ENCODE measurements at regions of chr16 and their contacts with region 1.

Region 1: DNA sequence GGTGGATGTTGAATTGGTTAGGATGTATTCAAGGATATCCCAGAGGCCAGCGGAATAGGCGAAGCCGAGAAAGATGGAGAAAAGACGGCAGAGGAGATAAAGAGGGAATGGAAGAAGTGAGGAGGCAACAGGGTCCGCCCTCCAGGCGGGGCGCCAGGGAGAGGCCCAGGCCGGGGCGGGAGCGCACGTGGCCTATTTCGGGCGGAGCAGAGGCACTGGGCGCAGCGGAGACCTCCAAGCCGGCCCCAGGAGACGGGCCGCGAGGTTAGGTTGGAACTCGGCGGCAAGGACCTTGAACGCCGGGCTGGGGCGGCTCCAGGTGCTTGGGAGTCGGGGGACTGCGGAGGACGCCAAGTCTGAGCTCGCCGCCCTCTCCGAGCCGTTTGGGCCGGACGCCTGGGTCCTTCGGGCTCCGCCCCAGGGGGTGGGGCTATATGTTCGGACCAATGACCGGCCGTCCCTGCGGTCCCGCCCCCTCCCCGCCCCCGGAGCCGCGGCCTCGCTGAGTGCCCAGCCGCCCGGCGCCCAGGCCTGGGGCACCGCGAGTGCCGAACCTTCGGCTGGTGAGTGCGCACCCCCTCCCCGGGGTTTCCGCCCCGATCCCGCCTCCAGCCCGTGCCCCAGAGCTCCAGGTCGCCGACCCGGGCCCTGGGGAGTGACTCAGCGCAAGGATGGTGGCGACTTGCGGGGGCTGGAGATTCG is at the start of gene ZNF771:
- H3K4me3 ChIP-seq: peak within 1 kb of the TSS; percentile 82
- H3K27ac ChIP-seq: peak within 1 kb of the TSS; percentile 92
- H3K4me1 ChIP-seq: peaks cover 5% of the 10 kb centered on the region; the same call in 1 of the 2 replicates
- CTCF ChIP-seq: peak; percentile 81

Region 2: DNA sequence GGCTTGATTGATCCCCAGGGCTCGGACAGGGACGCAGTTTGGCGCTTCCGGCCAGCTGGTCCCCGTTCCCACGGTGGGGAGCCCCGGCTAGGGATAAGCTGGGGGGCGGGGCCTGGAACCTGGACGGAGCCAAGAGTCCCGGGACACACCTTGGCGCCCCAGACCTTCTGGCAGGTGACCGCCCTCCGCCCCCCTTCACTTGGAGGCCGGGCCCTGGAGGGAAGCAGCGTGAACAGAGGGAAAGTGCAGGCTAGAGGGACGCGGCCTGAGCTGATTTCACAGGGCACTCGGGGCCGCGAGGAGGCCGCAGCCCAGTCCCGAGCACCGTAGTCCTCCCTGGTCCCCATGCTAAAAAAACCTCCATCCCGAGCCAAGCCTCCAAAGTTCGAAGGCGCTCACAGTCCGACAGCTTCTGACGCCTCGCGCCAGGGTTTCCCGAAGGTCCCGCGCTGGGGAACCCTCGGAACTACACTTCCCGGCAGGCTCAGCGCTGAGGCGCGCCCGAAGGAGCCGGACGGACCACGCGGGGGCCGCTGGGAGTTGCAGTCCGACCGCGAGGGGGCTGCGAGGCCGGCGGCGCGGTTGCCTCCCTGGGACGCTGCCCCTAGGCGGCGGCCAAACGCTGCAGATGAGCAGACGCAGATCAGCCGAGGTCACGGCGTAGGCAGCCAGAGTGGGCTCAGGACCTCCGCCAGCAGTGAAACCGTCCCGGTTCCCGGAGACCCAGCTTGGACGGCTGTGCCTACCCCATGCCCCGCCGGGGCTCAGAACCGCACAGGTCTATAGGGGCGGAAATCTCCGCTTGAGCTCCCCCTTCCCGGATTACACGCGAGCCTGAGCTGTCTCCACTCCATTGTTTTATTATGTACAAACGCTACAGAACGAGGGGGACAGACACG is 315.5 kb before region 1 on chr16 and contains the start of gene TBX6:
- CTCF ChIA-PET with region 1: interaction called, 11 read pairs
- POLR2A ChIA-PET with region 1: interaction called, 6 read pairs
- H3K4me3 ChIP-seq: peak within 1 kb of the TSS; percentile 12
- H3K27ac ChIP-seq: peak within 1 kb of the TSS; percentile 8; the same call in 1 of the 2 replicates
- H3K4me1 ChIP-seq: no peaks in the 10 kb centered on the region
- CTCF ChIP-seq: peak; percentile 98

Region 3: GRCh38 chr16:30365200-30365720 is 42.0 kb before region 1 on chr16:
- CTCF ChIA-PET with region 1: interaction called, 16 read pairs
- POLR2A ChIA-PET with region 1: interaction called, 32 read pairs
- H3K4me3 ChIP-seq: no peak overlapping the region
- H3K27ac ChIP-seq: no peak overlapping the region
- H3K4me1 ChIP-seq: no peaks in the 10 kb centered on the region; the same call in 1 of the 2 replicates
- CTCF ChIP-seq: no peak

Region 4: DNA sequence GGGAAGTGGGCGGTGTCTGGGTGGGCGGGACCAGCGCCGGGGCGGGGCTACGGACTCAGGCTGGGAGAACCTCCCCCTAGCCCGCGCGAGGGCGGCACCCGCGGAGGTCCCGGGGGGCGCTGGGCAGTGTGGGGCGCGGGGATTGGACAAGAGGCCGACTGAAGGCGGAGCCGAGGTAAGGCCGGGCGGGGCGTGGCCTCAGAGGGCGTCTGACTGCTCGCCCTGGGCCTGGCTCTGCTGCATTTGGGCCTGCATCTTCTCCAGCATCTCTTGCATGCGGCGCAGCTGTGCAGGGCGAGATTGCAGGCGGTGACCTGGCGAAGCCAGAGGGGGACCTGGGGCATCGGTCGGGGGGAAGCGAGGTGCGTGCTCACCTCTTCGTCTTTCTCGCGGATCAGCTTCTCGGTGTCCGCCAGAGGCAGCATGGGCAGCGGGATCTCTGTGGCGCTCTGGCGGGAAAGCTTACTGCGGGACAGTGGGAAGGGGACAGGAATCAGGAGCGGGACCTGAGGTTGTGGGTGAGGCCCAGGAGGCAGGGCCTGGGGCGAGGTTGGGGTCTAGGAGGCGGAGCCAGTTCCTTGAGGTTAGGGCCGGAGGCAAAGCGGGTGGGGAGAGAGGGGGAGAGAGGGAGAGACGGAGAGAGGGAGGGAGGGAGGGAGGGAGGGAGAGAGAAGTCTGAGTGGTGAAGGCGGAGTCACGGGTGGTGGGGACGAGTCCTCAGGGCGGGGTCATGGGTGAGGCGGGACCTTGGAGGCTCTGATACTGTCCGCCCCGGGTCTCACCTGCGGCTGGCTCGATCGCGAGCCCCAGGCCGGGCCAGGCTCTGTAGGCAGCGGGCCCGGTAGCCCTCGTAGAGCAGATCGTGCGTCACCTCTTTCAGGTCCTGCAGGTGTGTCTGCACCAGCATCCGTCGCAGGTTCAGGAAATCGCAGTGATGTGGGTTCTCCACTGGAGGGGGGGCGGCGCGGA is 28.7 kb before region 1 on chr16:
- CTCF ChIA-PET with region 1: interaction called, 10 read pairs
- POLR2A ChIA-PET with region 1: interaction called, 8 read pairs
- H3K4me3 ChIP-seq: peak overlapping the region; percentile 78
- H3K27ac ChIP-seq: peak overlapping the region; percentile 97
- H3K4me1 ChIP-seq: no peaks in the 10 kb centered on the region
- CTCF ChIP-seq: peak; percentile 92

Region 5: GRCh38 chr16:30417529-30418349 is 10.5 kb after region 1 on chr16:
- CTCF ChIA-PET with region 1: interaction called, 15 read pairs
- POLR2A ChIA-PET with region 1: interaction called, 64 read pairs
- H3K4me3 ChIP-seq: peak overlapping the region; percentile 37
- H3K27ac ChIP-seq: peak overlapping the region; percentile 85
- H3K4me1 ChIP-seq: peaks cover 12% of the 10 kb centered on the region
- CTCF ChIP-seq: peak; percentile 89

Region 6: GRCh38 chr16:30519120-30520049 is 112.1 kb after region 1 on chr16:
- CTCF ChIA-PET with region 1: no interaction called
- POLR2A ChIA-PET with region 1: no interaction called
- H3K4me3 ChIP-seq: no peak overlapping the region
- H3K27ac ChIP-seq: no peak overlapping the region
- H3K4me1 ChIP-seq: peaks cover 3% of the 10 kb centered on the region; the same call in 1 of the 2 replicates
- CTCF ChIP-seq: no peak

Region 7: DNA sequence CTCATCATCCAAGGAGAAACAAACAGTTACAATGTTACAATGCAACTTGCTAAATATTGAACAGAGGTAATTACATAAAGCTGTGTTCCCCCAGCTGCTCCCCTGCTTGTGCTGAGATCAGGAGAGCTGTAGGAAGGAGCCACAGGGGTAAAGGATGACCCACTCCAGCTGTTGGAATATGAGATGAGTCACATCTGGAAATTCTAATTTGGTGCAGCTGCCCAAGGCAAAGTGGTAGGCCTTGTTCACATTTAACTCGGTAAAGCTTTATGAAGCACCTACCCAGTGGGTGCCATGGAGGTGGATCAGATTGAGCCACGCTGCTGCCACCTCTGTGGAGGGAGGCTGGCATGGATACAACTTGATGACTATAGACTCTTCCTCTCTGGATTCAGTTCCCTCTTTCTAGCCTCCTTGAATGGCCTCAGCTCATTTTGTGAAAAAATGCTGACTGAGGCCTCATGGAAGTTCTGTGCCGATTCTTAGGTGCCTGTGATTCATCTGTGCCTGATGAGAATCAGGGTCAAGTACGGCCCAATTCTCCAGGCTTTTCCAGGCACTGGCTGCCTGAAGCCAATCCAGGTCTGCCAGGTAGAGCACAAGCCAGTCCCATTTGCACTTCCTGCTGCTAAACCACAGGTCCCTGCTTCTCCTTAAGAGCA is 195.5 kb after region 1 on chr16:
- CTCF ChIA-PET with region 1: interaction called, 11 read pairs
- POLR2A ChIA-PET with region 1: no interaction called
- H3K4me3 ChIP-seq: no peak overlapping the region
- H3K27ac ChIP-seq: no peak overlapping the region
- H3K4me1 ChIP-seq: no peaks in the 10 kb centered on the region
- CTCF ChIP-seq: no peak

Region 8: DNA sequence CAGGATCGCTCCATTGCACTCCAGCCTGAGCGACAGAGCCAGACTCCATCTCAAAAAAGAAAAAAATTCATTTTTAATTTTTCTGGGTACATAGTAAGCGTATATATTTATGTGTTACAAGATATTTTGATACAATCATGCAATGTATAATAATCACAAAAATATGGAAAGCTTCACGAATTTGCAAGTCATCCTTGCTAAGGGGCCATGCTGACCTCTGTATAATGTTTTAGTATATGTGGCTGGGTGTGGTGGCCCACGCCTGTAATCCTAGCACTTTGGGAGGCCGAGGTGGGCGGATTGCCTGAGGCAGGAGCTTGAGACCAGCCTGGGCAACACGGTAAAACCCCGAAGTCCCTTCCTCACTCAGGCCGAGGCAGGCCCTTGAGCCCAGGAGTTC is 267.9 kb after region 1 on chr16:
- CTCF ChIA-PET with region 1: no interaction called
- POLR2A ChIA-PET with region 1: no interaction called
- H3K4me3 ChIP-seq: no peak overlapping the region
- H3K27ac ChIP-seq: no peak overlapping the region
- H3K4me1 ChIP-seq: no peaks in the 10 kb centered on the region
- CTCF ChIP-seq: no peak